ENCODE measurements at regions of chr19 and their contacts with region 1.

Region 1: DNA sequence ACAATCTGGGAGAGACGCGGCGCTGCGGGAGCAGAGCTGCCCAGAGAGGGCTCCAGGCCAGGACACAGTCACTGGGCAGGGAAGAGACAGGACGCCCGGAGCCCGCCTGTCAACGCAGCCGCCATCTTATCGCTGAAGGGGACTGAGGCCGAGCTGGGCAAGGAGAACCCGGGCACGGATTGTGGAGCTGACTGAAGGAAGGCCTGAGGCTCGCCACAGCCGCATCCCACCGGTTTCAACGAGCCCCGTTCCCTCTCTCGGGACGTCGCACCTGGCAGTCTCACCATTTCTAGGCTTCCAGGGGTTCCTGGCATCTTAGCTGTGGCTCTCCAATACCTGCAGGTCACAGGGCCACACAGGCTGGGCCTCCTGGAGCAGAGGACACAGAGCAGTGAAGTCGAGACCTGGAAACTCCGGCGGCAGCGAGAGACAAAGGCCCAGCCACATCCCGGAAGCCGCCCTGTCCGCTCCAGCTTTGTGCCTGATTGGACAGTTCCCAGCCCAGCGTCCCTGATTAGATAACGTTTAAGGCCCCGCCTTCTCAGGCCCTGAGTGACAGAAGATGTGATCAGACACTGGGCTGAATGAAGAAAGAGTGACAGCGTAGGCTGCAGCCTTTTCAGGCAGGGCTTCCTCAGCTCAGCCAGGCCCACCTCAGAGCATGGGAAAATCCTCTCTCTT is at the start of gene ZNF91:
- DNase-seq: peak; percentile 97
- H3K4me3 Mint-ChIP-seq: peak within 1 kb of the TSS; percentile 97
- H3K27ac Mint-ChIP-seq: peak within 1 kb of the TSS; percentile 98
- H3K4me1 Mint-ChIP-seq: peaks cover 29% of the 10 kb centered on the region
- H3K27me3 Mint-ChIP-seq: no peaks in the 10 kb centered on the region
- total RNA-seq, gene ZNF91: 33.7 to 36.3 TPM

Region 2: DNA sequence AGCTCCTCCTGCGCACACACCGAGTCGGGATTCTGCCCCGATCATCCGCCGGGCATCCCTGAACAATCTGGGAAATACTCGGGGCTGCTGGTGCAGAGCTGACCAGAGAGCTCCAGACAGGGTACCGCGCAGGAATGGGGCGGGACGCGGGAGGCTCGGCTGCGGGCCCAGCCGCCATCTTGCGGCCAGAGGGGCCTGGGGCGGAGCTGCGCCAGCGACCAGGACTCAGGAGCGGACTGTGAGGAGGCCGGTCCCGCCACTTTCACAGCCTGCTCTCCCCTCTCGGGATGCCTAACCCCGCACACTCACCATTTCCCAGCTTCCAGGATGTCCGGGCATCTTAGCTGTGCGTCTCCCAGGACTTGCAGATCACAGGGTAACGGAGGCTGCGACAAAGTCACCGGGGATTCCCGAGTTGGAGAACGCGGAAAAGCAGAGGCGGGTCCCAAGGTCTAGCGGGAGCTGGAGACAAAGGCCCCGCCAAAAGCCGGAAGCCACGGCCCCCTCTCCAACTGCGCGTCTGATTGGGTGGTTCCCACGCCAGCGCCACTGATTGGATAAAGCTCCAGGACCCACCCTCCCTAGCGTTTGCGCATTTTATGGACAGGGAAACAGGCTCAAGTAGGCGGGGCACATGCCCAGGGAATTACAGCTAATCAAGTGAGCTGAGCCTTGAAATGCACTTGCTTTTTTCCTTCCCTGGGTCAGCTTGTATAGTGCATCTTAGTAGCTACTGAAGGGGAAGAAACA is 1543.4 kb before region 1 on chr19:
- CTCF ChIA-PET with region 1: no interaction called
- intact Hi-C with region 1: loop called (anchors 10 kb)
- DNase-seq: peak; percentile 97
- H3K4me3 Mint-ChIP-seq: peak overlapping the region; percentile 88
- H3K27ac Mint-ChIP-seq: peak overlapping the region; percentile 91
- H3K4me1 Mint-ChIP-seq: peaks cover 31% of the 10 kb centered on the region
- H3K27me3 Mint-ChIP-seq: no peaks in the 10 kb centered on the region

Region 3: GRCh38 chr19:23249911-23250649 is 145.1 kb before region 1 on chr19 and contains the start of gene ZNF724:
- CTCF ChIA-PET with region 1: no interaction called
- intact Hi-C with region 1: loop called (anchors 1 kb)
- DNase-seq: peak; percentile 95
- H3K4me3 Mint-ChIP-seq: peak within 1 kb of the TSS; percentile 97
- H3K27ac Mint-ChIP-seq: peak within 1 kb of the TSS; percentile 94
- H3K4me1 Mint-ChIP-seq: peaks cover 14% of the 10 kb centered on the region
- H3K27me3 Mint-ChIP-seq: no peaks in the 10 kb centered on the region
- total RNA-seq, gene ZNF724: 12.9 to 13.3 TPM

Region 4: GRCh38 chr19:23273590-23274413 is 121.4 kb before region 1 on chr19:
- CTCF ChIA-PET with region 1: no interaction called
- intact Hi-C with region 1: loop called (anchors 1 kb)
- DNase-seq: peak; percentile 96
- H3K4me3 Mint-ChIP-seq: peak overlapping the region; percentile 93
- H3K27ac Mint-ChIP-seq: peak overlapping the region; percentile 92
- H3K4me1 Mint-ChIP-seq: peaks cover 28% of the 10 kb centered on the region
- H3K27me3 Mint-ChIP-seq: no peaks in the 10 kb centered on the region

Region 5: DNA sequence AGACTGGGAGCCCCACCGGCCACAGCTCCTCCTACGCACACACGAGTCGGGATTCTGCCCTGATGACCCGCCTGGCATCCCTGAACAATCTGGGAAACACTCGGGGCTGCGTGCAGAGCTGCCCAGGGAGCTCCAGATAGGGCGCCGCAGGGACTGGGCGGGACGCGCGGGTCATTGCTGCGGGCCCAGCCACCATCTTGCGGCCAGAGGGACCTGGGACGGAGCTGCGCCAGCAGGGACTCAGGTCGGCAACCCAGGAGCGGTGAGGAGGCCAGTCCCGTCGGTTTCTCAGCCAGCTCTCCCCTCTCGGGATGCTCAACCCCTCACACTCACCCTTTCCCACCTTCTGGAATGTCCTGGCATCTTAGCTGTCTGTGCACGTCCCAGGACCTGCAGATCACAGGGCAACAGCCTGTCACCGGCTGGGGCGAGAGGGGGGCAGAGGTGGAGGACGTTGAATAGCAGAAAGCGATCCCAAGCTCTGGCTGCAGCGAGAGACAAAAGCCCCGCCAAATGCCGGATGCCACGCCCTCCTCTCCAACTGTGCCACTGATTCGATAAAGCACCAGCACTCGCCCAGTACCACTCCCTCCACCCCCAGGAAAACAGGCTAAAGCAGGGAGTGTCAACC is 20.5 kb after region 1 on chr19:
- CTCF ChIA-PET with region 1: no interaction called
- intact Hi-C with region 1: loop called (anchors 1 kb)
- DNase-seq: peak; percentile 27
- H3K4me3 Mint-ChIP-seq: peak overlapping the region; percentile 68
- H3K27ac Mint-ChIP-seq: no peak overlapping the region
- H3K4me1 Mint-ChIP-seq: peaks cover 10% of the 10 kb centered on the region
- H3K27me3 Mint-ChIP-seq: peaks cover 25% of the 10 kb centered on the region

Region 6: GRCh38 chr19:23686621-23687423 is 291.6 kb after region 1 on chr19 and contains the start of gene ZNF675:
- CTCF ChIA-PET with region 1: interaction called, 6 read pairs
- intact Hi-C with region 1: loop called (anchors 1 kb)
- DNase-seq: peak; percentile 94
- H3K4me3 Mint-ChIP-seq: peak within 1 kb of the TSS; percentile 96
- H3K27ac Mint-ChIP-seq: peak within 1 kb of the TSS; percentile 97
- H3K4me1 Mint-ChIP-seq: peaks cover 44% of the 10 kb centered on the region
- H3K27me3 Mint-ChIP-seq: no peaks in the 10 kb centered on the region
- total RNA-seq, gene ZNF675: 23.8 to 25.2 TPM

Region 7: DNA sequence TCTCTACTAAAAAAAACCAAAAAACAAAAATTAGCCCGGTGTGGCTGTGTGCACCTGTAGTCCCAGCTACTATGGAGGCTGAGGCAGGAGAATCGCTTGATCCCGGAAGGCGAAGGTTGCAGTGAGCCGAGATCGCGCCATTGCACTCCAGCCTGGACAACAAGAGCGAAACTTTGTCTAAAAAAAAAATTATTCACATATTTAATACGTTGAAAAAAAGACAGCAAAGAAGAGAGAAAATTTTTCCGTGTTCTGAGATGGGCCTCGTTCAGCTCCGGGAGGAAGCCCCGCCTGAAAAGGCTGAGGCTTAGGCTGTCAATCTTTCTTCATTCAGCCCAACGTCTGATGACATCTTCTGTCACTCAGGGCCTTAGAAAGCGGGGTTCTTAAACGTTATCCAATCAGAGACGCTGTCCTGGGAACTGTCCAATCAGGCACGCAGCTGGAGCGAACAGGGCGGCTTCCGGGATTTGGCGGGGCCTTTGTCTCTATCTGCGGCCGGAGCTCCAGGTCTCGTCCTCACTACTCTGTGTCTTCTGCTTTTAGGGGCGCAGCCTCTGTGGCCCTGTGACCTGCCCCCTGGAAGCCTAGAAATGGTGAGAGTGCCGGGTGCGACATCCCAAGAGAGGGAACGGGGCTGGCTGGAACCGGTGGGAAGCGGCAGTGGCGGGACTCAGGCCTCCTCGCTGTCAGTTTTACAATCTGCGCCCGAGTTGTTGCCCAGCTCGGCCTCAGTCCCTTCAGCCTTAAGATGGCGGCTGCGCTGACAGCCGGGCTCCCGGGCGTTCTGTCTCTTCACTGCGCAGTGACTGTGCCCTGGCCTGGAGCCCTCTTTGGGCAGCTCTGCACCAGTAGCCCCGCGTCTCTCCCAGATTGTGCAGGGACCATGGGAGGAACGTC is 519.5 kb after region 1 on chr19 and contains the start of gene ZNF726:
- CTCF ChIA-PET with region 1: no interaction called
- intact Hi-C with region 1: loop called (anchors 1 kb)
- DNase-seq: peak; percentile 93
- H3K4me3 Mint-ChIP-seq: peak within 1 kb of the TSS; percentile 96
- H3K27ac Mint-ChIP-seq: peak within 1 kb of the TSS; percentile 91
- H3K4me1 Mint-ChIP-seq: peaks cover 11% of the 10 kb centered on the region
- H3K27me3 Mint-ChIP-seq: peaks cover under 1% of the 10 kb centered on the region
- total RNA-seq, gene ZNF726: 22.3 to 22.8 TPM

Measured in activated naive CD4-positive, alpha-beta T cell treated with anti-CD3 and anti-CD28 coated beads for 36 hours (primary cell).